Endothelial cell of umbilical vein (primary cell): ENCODE measurements at regions of chr13 and their contacts with region 1.

Region 1: GRCh38 chr13:97268772-97269171 is 46.6 kb downstream of the MBNL2 start:
- DNase-seq: peak; percentile 72
- H3K4me3 ChIP-seq: no peak overlapping the region
- H3K27ac ChIP-seq: peak overlapping the region; percentile 77
- H3K4me1 ChIP-seq: peaks cover 71% of the 10 kb centered on the region
- H3K27me3 ChIP-seq: no peaks in the 10 kb centered on the region
- CTCF ChIP-seq: peak; percentile 35 to 36
- POLR2A ChIP-seq: no peak

Region 2: GRCh38 chr13:97205982-97206381 is 62.8 kb before region 1 on chr13:
- CTCF ChIA-PET with region 1: no interaction called
- POLR2A ChIA-PET with region 1: no interaction called
- dilution Hi-C with region 1: no loop called
- intact Hi-C with region 1: no loop called
- DNase-seq: peak; percentile 26
- H3K4me3 ChIP-seq: no peak overlapping the region
- H3K27ac ChIP-seq: no peak overlapping the region
- H3K4me1 ChIP-seq: peaks cover 8% of the 10 kb centered on the region
- H3K27me3 ChIP-seq: no peaks in the 10 kb centered on the region
- CTCF ChIP-seq: no peak
- POLR2A ChIP-seq: no peak

Region 3: GRCh38 chr13:97242755-97243497 is 25.8 kb before region 1 on chr13:
- CTCF ChIA-PET with region 1: interaction called, 11 read pairs
- POLR2A ChIA-PET with region 1: interaction called, 4 read pairs
- dilution Hi-C with region 1: no loop called
- intact Hi-C with region 1: no loop called
- DNase-seq: peak; percentile 43
- H3K4me3 ChIP-seq: no peak overlapping the region
- H3K27ac ChIP-seq: peak overlapping the region; percentile 79
- H3K4me1 ChIP-seq: peaks cover 93% of the 10 kb centered on the region
- H3K27me3 ChIP-seq: no peaks in the 10 kb centered on the region
- CTCF ChIP-seq: no peak
- POLR2A ChIP-seq: no peak

Region 4: DNA sequence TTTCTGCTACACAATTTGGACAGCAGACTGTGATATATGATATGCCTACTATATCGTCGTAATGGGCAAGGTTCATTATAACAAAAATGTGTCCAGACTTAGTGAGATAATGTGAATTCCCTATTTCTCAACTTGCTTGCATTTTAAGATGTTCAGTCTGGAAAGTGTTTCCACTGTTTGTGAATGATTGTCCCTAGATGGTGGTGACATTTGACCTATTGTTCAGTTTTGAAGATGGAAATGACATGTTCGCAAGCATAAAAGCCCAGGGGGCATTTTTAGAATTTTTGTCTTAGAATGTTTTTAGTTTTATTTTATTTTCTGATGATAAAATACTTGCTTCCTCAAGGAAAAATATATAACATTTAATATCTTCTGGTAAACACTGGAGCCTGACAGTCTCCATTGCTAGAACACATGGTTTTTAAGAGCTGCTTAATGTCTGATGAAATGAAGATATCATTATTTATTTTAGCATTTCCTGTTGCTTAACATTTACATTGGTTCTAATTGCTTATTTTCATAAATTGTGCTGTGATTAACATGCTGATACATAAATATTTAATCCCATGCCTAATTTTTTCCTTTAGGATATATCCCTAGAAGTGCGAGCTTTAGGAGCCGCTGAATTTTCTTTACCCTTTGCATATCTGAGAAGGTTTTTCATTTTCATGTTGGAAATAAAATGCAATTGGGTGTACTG is 19.5 kb before region 1 on chr13:
- CTCF ChIA-PET with region 1: interaction called, 16 read pairs
- POLR2A ChIA-PET with region 1: no interaction called
- dilution Hi-C with region 1: no loop called
- intact Hi-C with region 1: no loop called
- DNase-seq: no peak
- H3K4me3 ChIP-seq: no peak overlapping the region
- H3K27ac ChIP-seq: peak overlapping the region; percentile 39
- H3K4me1 ChIP-seq: peaks cover 63% of the 10 kb centered on the region
- H3K27me3 ChIP-seq: no peaks in the 10 kb centered on the region
- CTCF ChIP-seq: no peak
- POLR2A ChIP-seq: no peak

Region 5: DNA sequence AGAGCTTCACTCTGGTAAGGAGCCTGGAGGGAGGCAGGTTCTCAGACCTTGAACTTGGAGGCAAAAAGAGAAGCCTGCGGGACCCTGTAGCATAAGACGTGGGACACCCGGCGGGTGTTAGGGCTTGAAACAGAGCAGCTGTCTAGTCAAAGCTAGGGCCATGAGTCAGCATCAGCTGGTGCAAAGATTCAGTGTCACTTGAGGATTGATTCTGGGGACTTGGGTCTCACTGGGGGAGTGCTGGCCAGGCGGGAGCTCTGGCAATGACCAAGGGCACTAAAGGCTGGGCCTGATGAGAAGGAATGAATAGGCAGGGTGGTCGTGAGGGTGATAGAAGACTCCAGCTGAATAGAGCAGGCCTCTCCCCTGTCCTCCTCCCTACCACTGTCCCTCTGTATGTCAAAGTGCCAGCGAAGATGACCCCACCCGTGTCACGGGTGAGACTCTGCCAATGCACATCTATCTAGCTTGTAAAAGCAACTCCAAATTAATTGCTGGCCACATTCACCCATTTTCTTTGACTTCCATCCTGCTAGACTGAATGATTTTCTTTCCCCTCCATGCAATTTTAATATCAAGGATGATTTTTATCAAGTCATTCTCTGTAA is 50.4 kb after region 1 on chr13:
- CTCF ChIA-PET with region 1: no interaction called
- POLR2A ChIA-PET with region 1: no interaction called
- dilution Hi-C with region 1: no loop called
- intact Hi-C with region 1: no loop called
- DNase-seq: no peak
- H3K4me3 ChIP-seq: no peak overlapping the region
- H3K27ac ChIP-seq: no peak overlapping the region
- H3K4me1 ChIP-seq: no peaks in the 10 kb centered on the region
- H3K27me3 ChIP-seq: no peaks in the 10 kb centered on the region
- CTCF ChIP-seq: no peak
- POLR2A ChIP-seq: no peak

Region 6: GRCh38 chr13:97559030-97559429 is 290.3 kb after region 1 on chr13:
- CTCF ChIA-PET with region 1: no interaction called
- POLR2A ChIA-PET with region 1: no interaction called
- dilution Hi-C with region 1: no loop called
- intact Hi-C with region 1: no loop called
- DNase-seq: no peak
- H3K4me3 ChIP-seq: no peak overlapping the region
- H3K27ac ChIP-seq: no peak overlapping the region
- H3K4me1 ChIP-seq: no peaks in the 10 kb centered on the region
- H3K27me3 ChIP-seq: peaks cover 0 to 2% of the 10 kb centered on the region in 2 experiments
- CTCF ChIP-seq: no peak
- POLR2A ChIP-seq: no peak

Region 7: DNA sequence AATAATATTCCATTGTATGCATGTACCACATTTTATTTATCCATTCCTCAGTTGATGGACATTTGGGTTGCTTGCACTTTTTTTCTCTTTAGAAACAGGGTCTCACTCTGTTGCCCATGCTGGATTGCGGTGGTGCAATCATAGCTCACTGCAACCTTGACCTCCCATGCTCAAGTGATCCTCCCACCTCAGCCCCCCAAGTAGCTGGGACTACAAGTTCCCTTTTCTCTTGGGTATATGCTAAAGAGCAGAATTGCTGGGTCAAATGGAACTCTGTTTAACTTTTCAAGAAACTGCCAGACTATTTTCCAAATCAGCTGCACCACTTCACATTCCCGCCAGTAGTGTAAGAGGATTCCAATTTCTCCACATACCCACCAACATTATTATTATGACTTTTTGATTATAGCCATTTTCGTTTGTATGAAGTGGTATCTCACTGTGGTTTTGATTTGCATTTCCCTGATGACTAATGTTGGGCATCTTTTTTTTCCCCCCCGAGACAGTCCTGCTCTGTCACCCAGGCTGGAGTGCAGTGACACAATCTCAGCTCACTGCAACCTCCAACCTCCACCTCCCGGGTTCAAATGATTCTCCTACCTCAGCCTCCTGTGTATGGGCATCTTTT is 677.1 kb after region 1 on chr13:
- CTCF ChIA-PET with region 1: no interaction called
- POLR2A ChIA-PET with region 1: no interaction called
- dilution Hi-C with region 1: no loop called
- intact Hi-C with region 1: no loop called
- DNase-seq: no peak
- H3K4me3 ChIP-seq: no peak overlapping the region
- H3K27ac ChIP-seq: no peak overlapping the region
- H3K4me1 ChIP-seq: no peaks in the 10 kb centered on the region
- H3K27me3 ChIP-seq: no peaks in the 10 kb centered on the region
- CTCF ChIP-seq: no peak
- POLR2A ChIP-seq: no peak